ENCODE measurements at regions of chr20 and their contacts with region 1.

Region 1: GRCh38 chr20:37095599-37096414 is at the start of gene RBL1:
- DNase-seq: peak; percentile 73 to 93 (median 80)
- ATAC-seq: peak; percentile 79
- H3K4me3 ChIP-seq: peak within 1 kb of the TSS; percentile 89
- H3K4me3 Mint-ChIP-seq: peak within 1 kb of the TSS; percentile 96
- H3K27ac ChIP-seq: peak within 1 kb of the TSS; percentile 69 to 92
- H3K27ac Mint-ChIP-seq: peak within 1 kb of the TSS; percentile 99
- H3K4me1 ChIP-seq: peaks cover 37% of the 10 kb centered on the region
- H3K4me1 Mint-ChIP-seq: peaks cover 34% of the 10 kb centered on the region
- H3K27me3 ChIP-seq: no peaks in the 10 kb centered on the region
- H3K27me3 Mint-ChIP-seq: no peaks in the 10 kb centered on the region
- CTCF ChIP-seq: peak; percentile 16
- total RNA-seq, gene RBL1: 37.4 to 39.1 TPM

Region 2: GRCh38 chr20:36773597-36774390 is 322.0 kb before region 1 on chr20 and contains the start of gene DSN1:
- CTCF ChIA-PET with region 1: no interaction called
- POLR2A ChIA-PET with region 1: no interaction called
- intact Hi-C with region 1: loop called in 1 of 2 experiments (anchors 2 kb)
- DNase-seq: peak; percentile 95 to 99 (median 98)
- ATAC-seq: peak; percentile 78
- H3K4me3 ChIP-seq: peak within 1 kb of the TSS; percentile 86
- H3K4me3 Mint-ChIP-seq: peak within 1 kb of the TSS; percentile 97
- H3K27ac ChIP-seq: peak within 1 kb of the TSS; percentile 83 to 91
- H3K27ac Mint-ChIP-seq: peak within 1 kb of the TSS; percentile 94
- H3K4me1 ChIP-seq: peaks cover 21% of the 10 kb centered on the region
- H3K4me1 Mint-ChIP-seq: peaks cover 21% of the 10 kb centered on the region
- H3K27me3 ChIP-seq: no peaks in the 10 kb centered on the region
- H3K27me3 Mint-ChIP-seq: no peaks in the 10 kb centered on the region
- CTCF ChIP-seq: no peak
- total RNA-seq, gene DSN1: 10.5 to 14.3 TPM

Region 3: DNA sequence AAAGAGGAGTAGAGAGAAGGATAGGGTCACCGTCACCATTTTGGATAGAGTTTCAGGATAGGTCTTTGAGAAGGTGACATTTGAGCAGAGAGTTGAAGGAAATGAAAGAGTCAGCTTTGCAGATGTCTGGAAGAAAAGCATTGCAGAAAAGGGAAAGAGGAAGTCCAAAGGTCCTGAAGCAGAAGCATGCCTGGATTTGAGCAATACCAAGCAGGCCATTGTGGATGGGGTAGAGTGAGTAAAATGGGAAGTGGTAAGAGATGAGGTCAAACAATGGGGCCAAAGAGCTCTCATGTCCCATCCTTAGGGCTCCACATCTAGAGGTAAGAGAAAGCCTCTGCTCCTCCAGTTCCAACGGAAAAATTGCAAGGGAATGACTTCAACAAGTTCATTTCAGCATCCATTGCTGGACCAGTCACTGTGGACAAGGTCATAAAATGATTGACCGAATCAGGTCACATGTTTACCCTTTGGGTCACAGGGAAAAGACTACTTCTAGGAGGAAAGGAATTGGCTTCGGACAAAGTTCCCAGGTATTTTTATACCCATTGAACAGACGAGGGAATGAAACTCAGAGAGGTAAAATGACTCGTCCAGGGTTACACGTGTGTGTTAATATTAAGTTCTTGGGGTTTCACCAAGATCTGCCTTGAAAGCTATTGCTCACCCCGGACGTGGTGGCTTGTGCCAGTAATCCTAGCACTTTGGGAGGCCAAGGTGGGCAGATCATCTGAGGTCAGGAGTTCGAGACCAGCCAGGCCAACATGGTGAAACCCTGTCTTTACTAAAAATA is 137.7 kb before region 1 on chr20:
- CTCF ChIA-PET with region 1: no interaction called
- POLR2A ChIA-PET with region 1: no interaction called
- intact Hi-C with region 1: no loop called
- DNase-seq: peak in 3 of 14 experiments; percentile 24 to 60 (median 50)
- ATAC-seq: no peak
- H3K4me3 ChIP-seq: no peak overlapping the region
- H3K4me3 Mint-ChIP-seq: no peak overlapping the region
- H3K27ac ChIP-seq: no peak overlapping the region
- H3K27ac Mint-ChIP-seq: no peak overlapping the region
- H3K4me1 ChIP-seq: peaks cover 38% of the 10 kb centered on the region
- H3K4me1 Mint-ChIP-seq: peaks cover 39% of the 10 kb centered on the region
- H3K27me3 ChIP-seq: no peaks in the 10 kb centered on the region
- H3K27me3 Mint-ChIP-seq: no peaks in the 10 kb centered on the region
- CTCF ChIP-seq: no peak

Region 4: GRCh38 chr20:37081717-37082289 is 14.0 kb before region 1 on chr20:
- CTCF ChIA-PET with region 1: interaction called, 4 read pairs
- POLR2A ChIA-PET with region 1: interaction called, 10 read pairs
- intact Hi-C with region 1: no loop called
- DNase-seq: peak; percentile 37 to 77 (median 54)
- ATAC-seq: peak; percentile 86
- H3K4me3 ChIP-seq: no peak overlapping the region
- H3K4me3 Mint-ChIP-seq: no peak overlapping the region
- H3K27ac ChIP-seq: peak overlapping the region in 1 of 2 donors; percentile 16
- H3K27ac Mint-ChIP-seq: peak overlapping the region; percentile 48
- H3K4me1 ChIP-seq: peaks cover 10% of the 10 kb centered on the region
- H3K4me1 Mint-ChIP-seq: peaks cover 25% of the 10 kb centered on the region
- H3K27me3 ChIP-seq: no peaks in the 10 kb centered on the region
- H3K27me3 Mint-ChIP-seq: no peaks in the 10 kb centered on the region
- CTCF ChIP-seq: peak; percentile 88

Region 5: DNA sequence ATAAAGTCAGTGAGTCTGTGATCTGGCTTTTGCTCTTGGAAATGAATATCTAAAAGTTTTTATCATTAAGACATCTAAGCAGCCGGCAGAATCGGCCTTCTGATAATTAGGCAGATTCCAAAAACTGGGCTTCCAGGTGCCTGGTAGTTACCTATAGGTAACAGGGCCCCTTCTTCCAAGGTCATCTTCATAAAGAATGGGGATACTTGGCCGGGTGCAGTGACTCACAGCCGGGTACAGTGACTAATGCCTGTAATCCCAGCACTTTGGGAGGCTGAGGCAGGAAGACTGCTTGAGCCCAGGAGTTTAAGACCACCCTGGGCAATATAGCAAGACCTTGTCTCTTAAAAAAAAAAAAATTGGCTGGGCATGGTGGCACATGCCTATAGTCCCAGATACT is 12.9 kb after region 1 on chr20:
- CTCF ChIA-PET with region 1: no interaction called
- POLR2A ChIA-PET with region 1: no interaction called
- intact Hi-C with region 1: no loop called
- DNase-seq: no peak
- ATAC-seq: no peak
- H3K4me3 ChIP-seq: no peak overlapping the region
- H3K4me3 Mint-ChIP-seq: no peak overlapping the region
- H3K27ac ChIP-seq: no peak overlapping the region
- H3K27ac Mint-ChIP-seq: no peak overlapping the region
- H3K4me1 ChIP-seq: no peaks in the 10 kb centered on the region
- H3K4me1 Mint-ChIP-seq: no peaks in the 10 kb centered on the region
- H3K27me3 ChIP-seq: no peaks in the 10 kb centered on the region
- H3K27me3 Mint-ChIP-seq: no peaks in the 10 kb centered on the region
- CTCF ChIP-seq: no peak

Region 6: GRCh38 chr20:37527638-37528441 is 432.0 kb after region 1 on chr20 and contains the start of gene BLCAP:
- CTCF ChIA-PET with region 1: no interaction called
- POLR2A ChIA-PET with region 1: no interaction called
- intact Hi-C with region 1: loop called in 1 of 2 experiments (anchors 5 kb)
- DNase-seq: peak; percentile 89 to 97 (median 92)
- ATAC-seq: peak; percentile 92
- H3K4me3 ChIP-seq: peak within 1 kb of the TSS; percentile 100
- H3K4me3 Mint-ChIP-seq: peak within 1 kb of the TSS; percentile 94
- H3K27ac ChIP-seq: peak within 1 kb of the TSS; percentile 99
- H3K27ac Mint-ChIP-seq: peak within 1 kb of the TSS; percentile 98
- H3K4me1 ChIP-seq: peaks cover 53% of the 10 kb centered on the region
- H3K4me1 Mint-ChIP-seq: peaks cover 52% of the 10 kb centered on the region
- H3K27me3 ChIP-seq: no peaks in the 10 kb centered on the region
- H3K27me3 Mint-ChIP-seq: no peaks in the 10 kb centered on the region
- CTCF ChIP-seq: no peak
- total RNA-seq, gene BLCAP: 59.4 to 60.1 TPM